ENCODE measurements at regions of chr7 and their contacts with region 1.

Region 1: GRCh38 chr7:115548756-115549155 is 481.8 kb downstream of the TFEC start:
- DNase-seq: no peak
- ATAC-seq: no peak

Region 2: DNA sequence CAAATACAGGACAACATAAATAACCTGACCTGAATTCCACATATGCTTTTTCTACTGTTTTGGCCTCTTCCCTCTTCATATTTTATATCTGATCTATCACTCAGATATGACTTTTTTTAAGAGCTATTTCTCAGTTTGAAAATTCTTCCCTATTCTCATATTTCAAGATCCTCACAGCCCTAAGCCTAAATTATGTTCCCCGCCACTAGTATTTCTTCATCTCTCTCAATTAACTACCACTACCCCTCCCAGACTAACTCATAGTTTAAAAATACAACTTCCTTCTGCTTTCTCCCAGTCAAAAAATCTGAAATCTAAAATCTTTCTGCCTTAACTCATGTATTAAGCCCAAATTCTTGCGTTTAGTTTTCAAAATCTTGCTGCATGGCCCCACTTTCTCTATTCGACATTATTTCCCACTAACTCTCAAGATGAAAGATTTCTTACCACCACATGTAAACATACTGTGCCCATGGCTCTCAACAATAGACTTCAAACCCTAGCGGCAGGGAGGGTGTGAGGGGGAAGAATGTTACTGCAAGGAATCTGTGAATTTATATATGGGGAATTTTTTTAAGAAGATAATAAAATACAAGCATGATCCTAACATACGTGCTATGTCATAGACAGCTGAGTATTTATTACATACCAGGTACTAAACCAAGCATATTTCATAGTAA is 417.2 kb after region 1 on chr7:
- intact Hi-C with region 1: loop called (anchors 5 kb)
- DNase-seq: no peak
- ATAC-seq: no peak